Dendritic cell treated with granulocyte-macrophage colony-stimulating factor and Interleukin-4, amounts not matched to agents 40 ng/mL and 50 ng/mL, for 4 days (primary cell): ENCODE measurements at regions of chr1 and their contacts with region 1.

Region 1: GRCh38 chr1:214328770-214329469 is 48.0 kb downstream of the SMYD2 start:
- H3K4me3 Mint-ChIP-seq: no peak overlapping the region
- H3K27ac Mint-ChIP-seq: no peak overlapping the region
- H3K4me1 Mint-ChIP-seq: peaks cover 5% of the 10 kb centered on the region
- H3K27me3 Mint-ChIP-seq: no peaks in the 10 kb centered on the region

Region 2: GRCh38 chr1:214214851-214215250 is 114.1 kb before region 1 on chr1:
- intact Hi-C with region 1: loop called (anchors 1 kb)
- H3K4me3 Mint-ChIP-seq: no peak overlapping the region
- H3K27ac Mint-ChIP-seq: no peak overlapping the region
- H3K4me1 Mint-ChIP-seq: peaks cover 6% of the 10 kb centered on the region
- H3K27me3 Mint-ChIP-seq: peaks cover 21% of the 10 kb centered on the region

Region 3: DNA sequence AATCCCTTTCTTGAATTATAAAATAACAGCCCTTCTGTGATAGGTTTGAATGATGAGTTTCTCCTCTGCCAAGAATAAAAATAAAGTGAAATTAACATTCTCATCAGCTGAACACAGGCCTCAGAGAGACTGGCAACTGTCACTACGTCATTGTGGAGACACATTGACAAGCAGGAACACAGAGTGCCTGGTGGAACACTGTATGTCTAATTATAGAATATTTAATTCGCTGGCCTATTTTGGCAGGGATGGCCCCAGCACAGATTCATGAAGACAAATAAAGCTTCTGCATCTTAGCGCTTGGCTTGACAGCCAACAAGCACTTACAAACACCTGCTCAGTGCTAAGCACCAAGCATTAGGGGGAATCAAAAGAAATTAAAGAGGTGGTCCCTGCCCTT is 99.9 kb before region 1 on chr1:
- intact Hi-C with region 1: no loop called
- H3K4me3 Mint-ChIP-seq: no peak overlapping the region
- H3K27ac Mint-ChIP-seq: no peak overlapping the region
- H3K4me1 Mint-ChIP-seq: peaks cover 10% of the 10 kb centered on the region
- H3K27me3 Mint-ChIP-seq: peaks cover 9% of the 10 kb centered on the region

Region 4: GRCh38 chr1:214261206-214262123 is 67.5 kb before region 1 on chr1:
- intact Hi-C with region 1: loop called (anchors 1 kb)
- H3K4me3 Mint-ChIP-seq: no peak overlapping the region
- H3K27ac Mint-ChIP-seq: no peak overlapping the region
- H3K4me1 Mint-ChIP-seq: peaks cover 12% of the 10 kb centered on the region
- H3K27me3 Mint-ChIP-seq: peaks cover 53% of the 10 kb centered on the region

Region 5: DNA sequence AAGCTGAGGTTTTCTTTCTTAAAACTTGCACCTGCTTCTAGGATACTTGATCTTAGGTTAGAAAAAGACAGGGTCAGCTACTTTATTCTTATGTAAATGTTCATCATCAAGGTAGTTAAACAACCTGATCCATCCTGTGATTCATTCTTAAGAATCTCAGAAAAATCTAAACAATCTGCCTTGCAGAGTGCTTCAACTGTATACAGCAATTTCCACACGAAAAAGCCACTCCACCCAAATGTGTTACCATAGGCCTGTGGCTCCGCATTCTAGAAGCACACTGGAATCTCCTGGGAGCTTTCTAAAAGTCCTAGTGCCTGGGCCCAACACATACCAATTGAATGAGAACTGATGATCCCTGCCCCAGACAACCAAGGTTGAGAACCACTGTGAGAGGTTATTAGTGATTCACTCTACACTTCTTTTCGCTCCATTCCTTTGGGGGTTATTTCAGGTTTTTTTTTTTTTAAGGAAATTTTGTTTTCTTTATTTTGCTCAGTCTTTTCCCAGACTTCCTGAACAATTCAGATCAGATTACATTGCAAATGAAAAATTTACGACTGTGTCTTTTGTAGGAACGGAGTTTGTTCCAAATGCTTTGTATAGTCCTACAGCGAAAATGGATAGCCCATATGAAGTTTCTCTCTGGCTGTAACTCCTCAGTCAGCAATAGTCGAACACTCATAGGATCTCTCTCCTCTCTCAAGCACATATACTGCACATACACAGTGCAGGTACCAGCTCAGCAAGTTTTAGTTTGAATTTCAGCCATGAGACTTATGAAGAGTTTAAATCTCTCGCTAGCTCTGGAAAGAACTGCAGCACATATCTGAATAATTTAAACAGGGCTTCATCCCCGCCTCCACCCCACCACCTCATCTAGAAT is 31.8 kb before region 1 on chr1:
- intact Hi-C with region 1: no loop called
- H3K4me3 Mint-ChIP-seq: no peak overlapping the region
- H3K27ac Mint-ChIP-seq: no peak overlapping the region
- H3K4me1 Mint-ChIP-seq: peaks cover 15% of the 10 kb centered on the region
- H3K27me3 Mint-ChIP-seq: no peaks in the 10 kb centered on the region

Region 6: DNA sequence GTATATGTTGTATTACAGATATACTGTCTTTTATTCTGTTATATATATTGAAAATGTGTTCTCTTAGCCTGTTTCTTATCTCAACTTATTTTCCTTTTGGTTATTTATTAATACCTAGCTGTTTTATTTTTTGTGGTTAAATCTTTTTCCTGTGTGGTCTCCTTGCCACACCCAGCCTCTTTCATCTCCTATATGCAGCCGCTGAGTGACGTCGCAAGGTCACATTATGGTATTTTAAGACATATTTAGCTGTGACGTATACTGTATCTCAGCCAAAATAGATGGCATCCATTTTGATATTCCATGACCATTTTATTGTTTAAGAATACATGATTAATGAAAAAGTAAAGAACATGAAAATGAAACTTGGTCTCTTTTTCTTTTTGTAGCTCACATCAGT is 303.2 kb after region 1 on chr1:
- intact Hi-C with region 1: loop called (anchors 2 kb)
- H3K4me3 Mint-ChIP-seq: no peak overlapping the region
- H3K27ac Mint-ChIP-seq: no peak overlapping the region
- H3K4me1 Mint-ChIP-seq: no peaks in the 10 kb centered on the region
- H3K27me3 Mint-ChIP-seq: no peaks in the 10 kb centered on the region

Region 7: GRCh38 chr1:215526553-215527151 is 1197.7 kb after region 1 on chr1:
- intact Hi-C with region 1: loop called (anchors 5 kb)
- H3K4me3 Mint-ChIP-seq: no peak overlapping the region
- H3K27ac Mint-ChIP-seq: no peak overlapping the region
- H3K4me1 Mint-ChIP-seq: peaks cover 16% of the 10 kb centered on the region
- H3K27me3 Mint-ChIP-seq: peaks cover 3% of the 10 kb centered on the region